GM12878 (cell line): ENCODE measurements at regions of chr6 and their contacts with region 1.

Region 1: DNA sequence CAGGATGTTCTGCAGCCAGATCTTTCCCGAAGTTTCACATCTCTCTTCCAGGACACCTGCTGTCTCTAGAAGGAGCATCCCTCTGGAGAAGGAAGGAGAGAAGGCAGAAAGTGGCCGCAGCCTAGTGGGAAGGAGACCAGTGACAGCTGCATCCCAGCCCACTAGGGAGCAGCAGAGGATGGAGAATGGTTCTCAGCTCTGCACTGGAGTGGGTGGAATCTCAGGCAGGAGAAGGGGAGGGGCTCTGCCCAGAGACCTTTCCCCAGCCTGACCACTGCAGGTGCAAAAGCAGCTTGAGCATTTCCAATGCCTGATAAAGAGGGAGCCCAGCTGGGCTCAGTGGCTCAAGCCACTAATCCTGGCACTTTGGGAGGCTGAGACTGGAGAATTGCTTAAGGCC is 32.3 kb downstream of the NCR2 start:
- DNase-seq: no peak
- ATAC-seq: peak; percentile 76
- H3K4me3 ChIP-seq: no peak overlapping the region
- H3K27ac ChIP-seq: no peak overlapping the region
- H3K4me1 ChIP-seq: no peaks in the 10 kb centered on the region
- H3K27me3 ChIP-seq: peaks cover 6 to 9% of the 10 kb centered on the region in 2 experiments; a peak in 3 of 4 replicates
- CTCF ChIP-seq: peak; percentile 46 to 68 (median 50); a peak in 4 of 6 replicates
- EP300 ChIP-seq: no peak
- POLR2A ChIP-seq: no peak
- RAD21 ChIP-seq: peak; percentile 65

Region 2: GRCh38 chr6:41111036-41111435 is 256.7 kb before region 1 on chr6:
- CTCF ChIA-PET with region 1: no interaction called
- POLR2A ChIA-PET with region 1: no interaction called
- RAD21 ChIA-PET with region 1: no interaction called
- SMC1A ChIA-PET with region 1: no interaction called
- in situ Hi-C with region 1: no loop called
- intact Hi-C with region 1: no loop called
- DNase-seq: no peak
- ATAC-seq: no peak
- H3K4me3 ChIP-seq: no peak overlapping the region
- H3K27ac ChIP-seq: no peak overlapping the region
- H3K4me1 ChIP-seq: no peaks in the 10 kb centered on the region
- H3K27me3 ChIP-seq: no peaks in the 10 kb centered on the region; a peak in 1 of 4 replicates
- CTCF ChIP-seq: no peak
- EP300 ChIP-seq: no peak
- POLR2A ChIP-seq: no peak
- RAD21 ChIP-seq: no peak

Region 3: GRCh38 chr6:41306187-41306854 is 61.4 kb before region 1 on chr6:
- CTCF ChIA-PET with region 1: interaction called, 80 read pairs
- POLR2A ChIA-PET with region 1: no interaction called
- RAD21 ChIA-PET with region 1: interaction called, 33 read pairs
- SMC1A ChIA-PET with region 1: interaction called, 63 read pairs
- in situ Hi-C with region 1: no loop called
- intact Hi-C with region 1: loop called (anchors 1 kb)
- DNase-seq: no peak
- ATAC-seq: peak; percentile 68
- H3K4me3 ChIP-seq: no peak overlapping the region
- H3K27ac ChIP-seq: no peak overlapping the region
- H3K4me1 ChIP-seq: peaks cover 3% of the 10 kb centered on the region; the same call in 1 of the 2 replicates
- H3K27me3 ChIP-seq: no peaks in the 10 kb centered on the region; a peak in 1 of 4 replicates
- CTCF ChIP-seq: peak; percentile 50 to 66 (median 63)
- EP300 ChIP-seq: no peak
- POLR2A ChIP-seq: no peak
- RAD21 ChIP-seq: peak; percentile 74

Region 4: DNA sequence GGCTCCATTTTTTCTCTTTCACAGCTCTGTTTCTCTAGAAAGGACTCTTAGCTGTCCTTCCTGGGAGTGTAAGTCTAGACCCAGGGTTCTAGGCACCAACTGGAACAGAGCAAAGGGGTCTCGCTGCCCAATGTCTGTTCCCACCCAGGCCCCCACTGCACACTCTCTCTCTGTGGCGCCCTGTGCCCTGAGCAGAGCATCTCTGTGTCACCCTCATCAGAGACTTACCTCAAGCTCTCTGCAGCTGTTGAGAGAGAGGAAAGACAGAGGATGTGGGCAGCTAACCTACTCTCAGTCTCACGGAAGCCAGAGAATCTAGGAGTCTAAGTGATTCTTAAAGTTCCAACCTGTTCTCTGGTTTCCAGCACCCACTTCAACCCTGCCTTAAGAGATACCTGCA is 22.8 kb before region 1 on chr6:
- CTCF ChIA-PET with region 1: interaction called, 20 read pairs
- POLR2A ChIA-PET with region 1: no interaction called
- RAD21 ChIA-PET with region 1: interaction called, 7 read pairs
- SMC1A ChIA-PET with region 1: interaction called, 12 read pairs
- in situ Hi-C with region 1: no loop called
- intact Hi-C with region 1: no loop called
- DNase-seq: no peak
- ATAC-seq: peak; percentile 78
- H3K4me3 ChIP-seq: no peak overlapping the region
- H3K27ac ChIP-seq: no peak overlapping the region
- H3K4me1 ChIP-seq: 0 out of 2 replicates have a peak, but pooled peaks cover 7% of the 10 kb centered on the region
- H3K27me3 ChIP-seq: peaks cover 0 to 3% of the 10 kb centered on the region in 2 experiments; a peak in 3 of 4 replicates
- CTCF ChIP-seq: no peak
- EP300 ChIP-seq: no peak
- POLR2A ChIP-seq: no peak
- RAD21 ChIP-seq: no peak

Region 5: GRCh38 chr6:41455818-41456217 is 88.1 kb after region 1 on chr6:
- CTCF ChIA-PET with region 1: interaction called, 24 read pairs
- POLR2A ChIA-PET with region 1: no interaction called
- RAD21 ChIA-PET with region 1: interaction called, 3 read pairs
- SMC1A ChIA-PET with region 1: interaction called, 3 read pairs
- in situ Hi-C with region 1: no loop called
- intact Hi-C with region 1: loop called (anchors 1 kb)
- DNase-seq: no peak
- ATAC-seq: no peak
- H3K4me3 ChIP-seq: no peak overlapping the region
- H3K27ac ChIP-seq: no peak overlapping the region
- H3K4me1 ChIP-seq: no peaks in the 10 kb centered on the region
- H3K27me3 ChIP-seq: peaks cover 4% of the 10 kb centered on the region in 2 experiments; a peak in 2 of 4 replicates
- CTCF ChIP-seq: no peak
- EP300 ChIP-seq: no peak
- POLR2A ChIP-seq: no peak
- RAD21 ChIP-seq: no peak

Region 6: GRCh38 chr6:41602864-41603608 is 235.3 kb after region 1 on chr6:
- CTCF ChIA-PET with region 1: interaction called, 20 read pairs
- POLR2A ChIA-PET with region 1: no interaction called
- RAD21 ChIA-PET with region 1: interaction called, 3 read pairs
- SMC1A ChIA-PET with region 1: interaction called, 8 read pairs
- in situ Hi-C with region 1: no loop called
- intact Hi-C with region 1: no loop called
- DNase-seq: peak; percentile 24
- ATAC-seq: peak; percentile 94
- H3K4me3 ChIP-seq: no peak overlapping the region
- H3K27ac ChIP-seq: no peak overlapping the region
- H3K4me1 ChIP-seq: no peaks in the 10 kb centered on the region
- H3K27me3 ChIP-seq: no peaks in the 10 kb centered on the region; a peak in 1 of 4 replicates
- CTCF ChIP-seq: peak; percentile 93 to 96 (median 96)
- EP300 ChIP-seq: no peak
- POLR2A ChIP-seq: no peak
- RAD21 ChIP-seq: peak; percentile 90